ENCODE measurements at regions of chr4 and their contacts with region 1.

Region 1: GRCh38 chr4:17447675-17448298 is 64.1 kb downstream of the QDPR start:
- DNase-seq: peak in 1 of 2 donors; percentile 66
- ATAC-seq: peak; percentile 55 to 91 (median 86)
- H3K4me3 ChIP-seq: no peak overlapping the region
- H3K27ac ChIP-seq: no peak overlapping the region
- H3K4me1 ChIP-seq: peaks cover 0 to 9% (median 0%) of the 10 kb centered on the region in 9 donors
- H3K27me3 ChIP-seq: no peaks in the 10 kb centered on the region
- CTCF ChIP-seq: peak; percentile 22 to 78 (median 72)

Region 2: DNA sequence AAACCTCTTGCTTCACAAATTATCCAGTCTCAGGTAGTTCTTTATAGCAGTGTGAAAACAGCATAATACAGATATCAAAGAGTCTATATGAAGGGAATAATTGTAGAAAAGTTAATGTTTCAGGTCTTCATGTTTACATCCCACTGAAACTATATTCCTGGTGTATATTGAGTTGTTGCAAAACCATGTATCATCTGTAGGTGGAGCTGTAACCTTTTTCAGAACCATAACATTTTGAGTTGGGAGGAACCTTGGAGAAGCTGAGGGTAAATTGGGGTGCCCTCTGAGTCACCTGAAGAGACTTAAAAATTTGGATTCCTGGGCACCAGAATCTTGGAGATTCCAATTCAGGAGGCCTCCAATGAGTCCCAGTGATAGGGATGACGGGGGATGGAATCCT is 1169.6 kb before region 1 on chr4:
- intact Hi-C with region 1: loop called in 1 of 10 experiments (anchors 5 kb)
- DNase-seq: no peak
- ATAC-seq: no peak
- H3K4me3 ChIP-seq: no peak overlapping the region
- H3K27ac ChIP-seq: no peak overlapping the region
- H3K4me1 ChIP-seq: no peaks in the 10 kb centered on the region
- H3K27me3 ChIP-seq: peaks cover 0 to 6% (median 0%) of the 10 kb centered on the region in 7 donors
- CTCF ChIP-seq: peak in 3 of 9 donors; percentile 14 to 32 (median 26)

Region 3: GRCh38 chr4:17232566-17233253 is 215.1 kb before region 1 on chr4:
- intact Hi-C with region 1: no loop called
- DNase-seq: peak; percentile 21 to 85
- ATAC-seq: peak; percentile 93 to 98 (median 96)
- H3K4me3 ChIP-seq: no peak overlapping the region
- H3K27ac ChIP-seq: peak overlapping the region; percentile 32 to 86 (median 70)
- H3K4me1 ChIP-seq: peaks cover 0 to 26% (median 14%) of the 10 kb centered on the region in 9 donors
- H3K27me3 ChIP-seq: no peaks in the 10 kb centered on the region
- CTCF ChIP-seq: no peak

Measured in heart right ventricle (tissue), 16 donors.